ENCODE measurements at regions of chr4 and their contacts with region 1.

Region 1: GRCh38 chr4:140004549-140004895 is 149.5 kb downstream of the MAML3 start:
- DNase-seq: no peak
- ATAC-seq: no peak

Region 2: DNA sequence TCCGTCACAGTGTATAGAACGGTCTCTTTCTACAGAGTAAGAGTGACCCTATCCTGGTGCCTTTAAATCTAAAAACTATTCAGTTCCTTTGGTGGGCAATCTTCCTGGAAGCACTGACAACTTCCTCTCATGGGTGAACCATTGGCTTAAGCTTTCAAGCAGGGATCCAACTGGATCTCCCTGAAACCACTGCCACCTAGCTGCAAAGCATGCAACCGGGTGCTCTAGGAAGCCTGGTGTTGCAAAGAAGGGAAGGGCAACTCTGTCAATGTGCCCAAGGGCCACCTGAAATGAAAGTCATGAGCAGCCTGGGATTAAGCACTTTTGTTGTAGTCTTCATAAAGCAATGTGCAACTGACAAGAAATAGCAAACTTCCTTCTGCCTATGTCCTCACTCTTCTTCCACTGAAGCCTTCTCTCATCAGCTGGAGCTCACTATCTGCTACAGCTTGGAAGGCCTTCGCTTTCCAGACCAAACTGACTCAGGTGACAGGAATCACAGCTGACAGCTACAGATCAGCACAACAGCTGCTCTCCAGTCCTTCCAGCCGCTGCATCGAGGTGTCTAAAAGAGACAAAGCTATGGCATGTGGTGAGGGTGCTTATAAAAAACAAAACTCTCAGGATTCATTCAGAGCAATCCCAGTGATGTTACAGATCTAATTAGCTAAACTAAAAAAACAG is 494.7 kb before region 1 on chr4:
- intact Hi-C with region 1: no loop called
- DNase-seq: peak in 1 of 2 donors; percentile 17
- ATAC-seq: peak; percentile 68

Region 3: GRCh38 chr4:139564502-139564901 is 440.0 kb before region 1 on chr4:
- intact Hi-C with region 1: no loop called
- DNase-seq: no peak
- ATAC-seq: no peak

Region 4: DNA sequence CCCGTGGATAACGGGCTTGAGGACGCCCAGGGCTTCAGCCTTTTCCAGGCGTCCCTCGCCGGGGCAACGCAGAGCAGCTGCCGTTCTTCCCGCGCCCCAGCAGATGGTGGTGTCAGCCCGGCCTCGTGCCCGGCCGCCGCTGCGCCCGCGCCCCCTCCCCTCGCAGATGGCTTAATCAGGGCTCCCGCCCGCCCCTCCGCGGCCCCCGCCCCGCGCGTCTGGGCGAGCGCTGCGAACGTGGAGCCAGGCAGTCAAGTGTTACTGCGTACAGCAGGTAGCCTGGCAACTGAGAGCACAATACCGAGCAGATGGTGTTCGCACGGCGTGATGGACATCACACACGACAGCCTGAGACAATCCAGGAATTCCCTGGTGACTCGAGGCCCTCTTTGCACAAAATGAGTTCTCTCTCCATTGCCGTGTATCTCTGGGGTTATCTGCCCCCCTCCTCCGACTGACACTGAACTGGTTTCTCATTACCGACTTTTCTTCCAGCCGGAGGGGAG is 269.6 kb before region 1 on chr4:
- intact Hi-C with region 1: loop called in 1 of 2 experiments (anchors 10 kb)
- DNase-seq: peak; percentile 67 to 75
- ATAC-seq: peak; percentile 88

Region 5: DNA sequence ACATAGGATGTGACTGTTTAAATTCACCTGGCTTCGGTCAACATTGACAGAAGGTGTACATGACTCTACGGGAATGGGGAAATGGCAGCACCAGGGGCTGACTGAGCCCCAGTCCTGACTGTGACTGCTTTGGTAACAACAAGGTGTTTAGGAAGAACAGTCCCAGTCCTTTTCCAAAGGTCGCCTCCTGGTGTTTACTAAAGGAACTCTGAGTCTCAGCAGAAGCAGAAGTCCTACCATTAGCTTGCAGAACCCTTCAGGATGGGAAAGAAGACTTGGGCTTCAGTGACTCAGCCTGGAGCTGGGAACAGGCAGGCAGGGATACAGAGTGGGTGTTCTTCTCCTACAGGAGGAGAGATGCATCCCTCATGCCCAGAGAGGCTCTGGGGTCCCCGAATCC is 235.6 kb before region 1 on chr4:
- intact Hi-C with region 1: no loop called
- DNase-seq: no peak
- ATAC-seq: peak; percentile 19

Region 6: GRCh38 chr4:140195806-140196205 is 191.3 kb after region 1 on chr4:
- intact Hi-C with region 1: no loop called
- DNase-seq: no peak
- ATAC-seq: no peak